ENCODE measurements at regions of chr9 and their contacts with region 1.

Region 1: GRCh38 chr9:1009101-1009707 is 32.7 kb downstream of the DMRT3 start:
- DNase-seq: peak; percentile 82
- H3K4me3 Mint-ChIP-seq: no peak overlapping the region
- H3K27ac Mint-ChIP-seq: no peak overlapping the region
- H3K4me1 Mint-ChIP-seq: peaks cover 3% of the 10 kb centered on the region
- H3K27me3 Mint-ChIP-seq: peaks cover 12% of the 10 kb centered on the region

Region 2: DNA sequence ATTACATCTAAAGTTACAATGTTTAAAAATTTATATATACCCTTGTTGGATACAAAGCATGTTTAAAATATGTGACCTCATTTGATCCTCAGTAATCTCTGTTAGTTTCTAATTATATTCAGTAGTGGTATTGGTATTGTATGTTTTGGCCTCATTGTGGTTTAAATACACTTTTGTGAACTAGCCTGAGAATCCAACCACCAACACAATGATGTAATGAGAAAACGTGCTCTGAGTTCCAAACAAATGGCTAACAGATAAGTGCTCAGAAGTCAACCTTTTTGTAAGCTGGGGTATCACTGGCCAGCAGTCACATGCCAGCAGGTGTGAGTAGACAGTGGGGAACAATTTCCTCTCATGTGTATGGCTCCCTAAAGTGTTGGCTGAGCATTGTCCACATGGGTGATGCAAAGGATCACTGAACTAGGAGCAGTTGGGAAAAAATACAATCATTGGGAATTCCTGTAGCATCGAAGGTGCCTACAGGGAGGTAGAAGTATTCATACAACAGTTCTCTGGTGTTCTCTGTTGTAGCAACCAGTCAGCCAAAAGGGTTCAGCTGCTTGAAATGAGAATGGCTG is 738.5 kb before region 1 on chr9:
- CTCF ChIA-PET with region 1: no interaction called
- DNase-seq: no peak
- H3K4me3 Mint-ChIP-seq: no peak overlapping the region
- H3K27ac Mint-ChIP-seq: peak overlapping the region; percentile 98
- H3K4me1 Mint-ChIP-seq: peaks cover 69% of the 10 kb centered on the region
- H3K27me3 Mint-ChIP-seq: no peaks in the 10 kb centered on the region

Region 3: DNA sequence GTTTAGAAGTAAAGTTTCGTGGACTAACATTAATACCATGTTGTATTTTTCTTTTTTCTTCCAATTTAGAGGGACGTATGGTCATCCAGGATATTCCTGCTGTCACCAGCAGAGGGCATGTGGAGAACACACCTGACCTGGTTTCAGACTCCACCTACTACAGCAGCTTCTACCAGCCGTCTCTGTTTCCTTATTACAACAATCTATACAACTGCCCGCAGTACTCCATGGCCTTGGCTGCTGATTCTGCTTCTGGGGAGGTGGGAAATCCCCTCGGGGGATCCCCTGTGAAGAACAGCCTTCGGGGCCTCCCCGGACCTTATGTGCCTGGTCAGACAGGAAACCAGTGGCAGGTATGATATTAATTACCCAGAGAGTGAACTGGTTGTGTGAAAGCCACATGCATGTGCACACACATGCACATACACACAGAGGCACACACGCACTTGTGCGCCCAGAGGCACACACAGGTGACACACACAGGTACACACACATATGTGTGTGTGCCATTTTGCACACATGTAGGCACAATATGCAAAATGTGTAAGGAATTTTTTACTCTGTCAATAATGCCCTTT is 115.3 kb before region 1 on chr9:
- CTCF ChIA-PET with region 1: interaction called, 68 read pairs
- DNase-seq: peak; percentile 66
- H3K4me3 Mint-ChIP-seq: no peak overlapping the region
- H3K27ac Mint-ChIP-seq: no peak overlapping the region
- H3K4me1 Mint-ChIP-seq: peaks cover 8% of the 10 kb centered on the region
- H3K27me3 Mint-ChIP-seq: peaks cover 20% of the 10 kb centered on the region

Region 4: GRCh38 chr9:994005-994404 is 15.2 kb before region 1 on chr9:
- CTCF ChIA-PET with region 1: interaction called, 13 read pairs
- DNase-seq: peak; percentile 36
- H3K4me3 Mint-ChIP-seq: no peak overlapping the region
- H3K27ac Mint-ChIP-seq: no peak overlapping the region
- H3K4me1 Mint-ChIP-seq: peaks cover 5% of the 10 kb centered on the region
- H3K27me3 Mint-ChIP-seq: peaks cover 35% of the 10 kb centered on the region